Right ventricle myocardium inferior (tissue), 1 donor: ENCODE measurements at regions of chr3 and their contacts with region 1.

Region 1: DNA sequence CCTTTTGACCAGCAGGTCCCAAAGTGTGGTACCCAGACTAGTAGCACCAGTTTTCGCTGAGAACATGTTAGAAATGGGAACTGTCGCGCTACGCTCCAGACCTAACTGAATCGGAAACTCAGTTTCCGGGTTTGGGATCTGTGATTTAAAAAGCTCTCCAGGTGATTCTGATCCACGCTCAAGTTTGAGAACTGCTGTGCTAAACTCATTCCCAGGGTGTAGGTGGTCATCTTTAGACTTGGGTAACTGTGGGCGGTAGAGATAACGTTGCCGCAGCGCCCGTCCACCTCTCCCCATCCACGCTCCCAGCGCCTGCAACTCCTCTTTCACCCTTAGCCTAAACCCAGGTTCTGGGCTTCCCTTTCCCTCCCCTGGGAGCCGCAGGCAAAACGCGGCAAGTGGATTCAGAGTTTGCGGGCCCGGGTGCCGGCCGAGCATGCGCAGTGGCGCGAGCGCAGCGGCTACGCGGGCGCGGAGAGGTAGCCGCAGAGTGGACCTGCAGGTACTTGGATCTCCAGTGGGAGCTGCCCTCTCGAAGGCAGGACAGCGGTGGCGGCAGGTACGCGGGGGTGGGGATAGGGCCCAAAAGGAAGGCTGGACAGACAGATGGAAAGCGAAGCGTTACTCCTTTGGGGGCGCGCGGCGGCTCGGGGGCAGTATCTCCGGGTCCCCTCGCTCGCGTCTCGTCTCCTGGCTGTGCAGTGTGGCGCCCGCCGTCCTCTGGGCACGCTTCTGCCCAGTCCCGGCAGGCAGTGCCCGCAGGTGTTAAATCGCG is at the start of gene PLS1:
- DNase-seq: peak; percentile 90
- ATAC-seq: peak; percentile 96
- total RNA-seq, gene PLS1: 2.5 TPM

Region 2: GRCh38 chr3:142680710-142681109 is 84.6 kb after region 1 on chr3:
- intact Hi-C with region 1: no loop called
- DNase-seq: no peak
- ATAC-seq: no peak

Region 3: GRCh38 chr3:142705198-142705597 is 109.1 kb after region 1 on chr3:
- intact Hi-C with region 1: no loop called
- DNase-seq: no peak
- ATAC-seq: no peak

Region 4: GRCh38 chr3:142723968-142724681 is 128.0 kb after region 1 on chr3 and contains the start of gene TRPC1:
- intact Hi-C with region 1: loop called (anchors 5 kb)
- DNase-seq: peak; percentile 87
- ATAC-seq: peak; percentile 94
- total RNA-seq, gene TRPC1: 9.2 TPM